A549 (cell line): ENCODE measurements at regions of chr11 and their contacts with region 1.

Region 1: GRCh38 chr11:75388386-75389275 is 10.7 kb upstream of the RPS3 start:
- DNase-seq: peak; percentile 86 to 87
- ATAC-seq: peak; percentile 57 to 73
- H3K4me3 ChIP-seq: no peak overlapping the region
- H3K27ac ChIP-seq: peak overlapping the region; percentile 36 to 75; a peak in 5 of 6 replicates
- H3K4me1 ChIP-seq: peaks cover 39% of the 10 kb centered on the region
- CTCF ChIP-seq: peak; percentile 95
- EP300 ChIP-seq: no peak
- POLR2A ChIP-seq: no peak
- RAD21 ChIP-seq: peak; percentile 92 to 94

Region 2: DNA sequence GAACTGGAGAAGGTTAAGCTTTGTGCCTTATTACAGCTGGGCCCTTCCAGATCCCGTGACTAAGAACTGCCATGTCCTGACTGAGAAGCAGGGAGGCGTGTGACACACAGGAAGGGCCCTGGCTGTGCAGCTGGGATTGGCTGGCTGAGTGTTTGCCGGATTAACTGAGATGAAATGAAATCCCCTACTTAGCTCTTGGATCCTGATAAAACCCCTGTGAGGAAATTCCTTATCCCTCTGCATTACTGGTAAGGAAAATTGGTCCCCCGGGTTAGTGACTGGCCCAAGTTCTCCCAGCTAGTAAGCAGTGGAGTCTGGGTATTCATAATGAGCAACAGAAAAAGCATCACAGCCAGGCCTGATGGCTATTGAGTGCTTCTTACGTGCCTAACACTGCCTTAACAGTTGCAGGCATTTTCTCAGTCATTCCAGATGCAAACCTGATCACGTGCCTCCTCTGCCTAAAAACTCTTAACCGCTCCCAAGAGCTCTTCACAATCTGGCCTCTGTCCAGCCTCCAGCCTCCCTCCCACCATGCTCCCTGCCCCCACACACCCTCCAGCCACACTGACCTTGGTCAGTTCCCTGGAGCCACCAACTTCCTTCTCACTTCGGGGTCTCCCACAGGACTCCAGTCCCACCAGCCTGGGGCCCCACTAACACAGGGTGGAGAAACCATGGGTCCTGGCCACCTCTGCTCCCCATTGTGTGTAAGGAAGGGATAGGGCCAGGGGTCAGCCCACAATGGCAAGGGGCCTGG is 74.9 kb before region 1 on chr11:
- CTCF ChIA-PET with region 1: interaction called, 13 read pairs
- POLR2A ChIA-PET with region 1: no interaction called
- DNase-seq: no peak
- ATAC-seq: no peak; a peak in 1 of 6 replicates
- H3K4me3 ChIP-seq: no peak overlapping the region
- H3K27ac ChIP-seq: no peak overlapping the region
- H3K4me1 ChIP-seq: peaks cover 2% of the 10 kb centered on the region; the same call in 2 of the 3 replicates
- CTCF ChIP-seq: no peak
- EP300 ChIP-seq: no peak
- POLR2A ChIP-seq: no peak
- RAD21 ChIP-seq: no peak

Region 3: DNA sequence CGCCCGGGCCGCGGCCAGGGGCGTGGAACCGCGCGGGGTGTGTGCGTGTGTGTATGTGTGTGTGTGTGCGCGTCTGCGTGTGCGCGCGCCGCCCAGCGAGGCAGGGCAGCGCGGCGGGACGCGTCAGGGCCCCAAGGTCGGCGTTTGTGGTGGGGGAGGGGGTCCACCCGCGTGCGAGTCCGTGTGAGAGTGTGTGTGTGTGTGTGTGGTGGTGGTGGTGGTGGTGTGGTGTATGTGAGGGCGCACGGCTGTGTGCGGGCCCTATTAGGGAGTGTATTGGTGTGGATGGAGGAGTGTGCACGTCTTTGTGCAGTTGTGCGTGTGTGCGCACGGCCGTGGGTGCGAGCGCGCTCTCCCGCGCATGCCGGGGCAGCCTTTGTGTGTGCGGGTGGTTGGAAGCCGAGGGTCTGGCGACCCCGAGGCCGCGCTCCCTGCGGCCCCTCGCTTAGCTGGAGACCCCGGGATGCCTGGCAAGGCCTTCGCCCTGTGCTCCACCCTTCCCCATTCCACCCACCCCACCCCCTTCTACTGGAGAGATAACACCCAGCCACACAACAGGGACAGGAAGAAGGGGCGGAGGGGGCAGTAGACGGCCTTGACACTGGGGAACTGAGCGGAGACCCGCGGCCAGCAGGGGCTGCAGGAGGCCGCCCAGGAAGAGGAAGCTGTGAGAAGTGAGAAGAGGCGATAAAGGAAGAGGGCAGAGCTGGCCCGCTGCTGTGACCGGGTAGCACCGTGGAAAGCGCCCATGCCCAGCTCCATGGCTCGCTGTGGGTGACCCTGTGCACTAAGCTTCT is 36.6 kb before region 1 on chr11:
- CTCF ChIA-PET with region 1: interaction called, 18 read pairs
- POLR2A ChIA-PET with region 1: no interaction called
- DNase-seq: peak in 1 of 2 experiments; percentile 30
- ATAC-seq: peak; percentile 56 to 65
- H3K4me3 ChIP-seq: peak overlapping the region; percentile 77
- H3K27ac ChIP-seq: peak overlapping the region; percentile 77 to 93
- H3K4me1 ChIP-seq: peaks cover 47% of the 10 kb centered on the region
- CTCF ChIP-seq: no peak
- EP300 ChIP-seq: no peak
- POLR2A ChIP-seq: peak; percentile 31; the same call in 1 of the 2 replicates
- RAD21 ChIP-seq: no peak

Region 4: GRCh38 chr11:75406338-75406777 is 17.7 kb after region 1 on chr11:
- CTCF ChIA-PET with region 1: interaction called, 53 read pairs
- POLR2A ChIA-PET with region 1: no interaction called
- DNase-seq: no peak
- ATAC-seq: no peak
- H3K4me3 ChIP-seq: no peak overlapping the region
- H3K27ac ChIP-seq: no peak overlapping the region
- H3K4me1 ChIP-seq: peaks cover 49% of the 10 kb centered on the region
- CTCF ChIP-seq: no peak
- EP300 ChIP-seq: no peak
- POLR2A ChIP-seq: no peak
- RAD21 ChIP-seq: no peak

Region 5: DNA sequence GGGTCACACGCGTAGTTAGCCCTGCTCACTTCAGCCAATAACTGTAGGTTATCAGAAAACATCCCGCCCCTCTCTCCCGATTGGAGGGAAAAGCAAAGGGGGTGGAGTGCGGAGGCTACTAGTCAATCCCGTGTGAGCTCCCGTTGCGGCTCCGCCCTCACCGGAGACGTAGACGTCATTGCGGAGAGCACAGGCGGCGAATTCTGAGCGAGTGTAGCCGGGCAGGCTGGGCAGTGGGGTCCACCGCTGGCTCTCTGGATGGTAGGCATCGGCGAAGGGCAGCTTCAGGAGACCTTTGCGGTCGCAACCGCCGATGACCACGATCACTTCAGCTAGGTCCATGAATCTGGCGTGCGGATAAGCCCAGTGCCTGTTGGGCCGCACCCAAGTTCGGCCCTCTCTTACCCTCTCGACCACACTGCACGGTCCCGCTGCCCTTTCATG is 39.7 kb after region 1 on chr11:
- CTCF ChIA-PET with region 1: interaction called, 27 read pairs
- POLR2A ChIA-PET with region 1: no interaction called
- DNase-seq: no peak
- ATAC-seq: no peak
- H3K4me3 ChIP-seq: no peak overlapping the region
- H3K27ac ChIP-seq: no peak overlapping the region
- H3K4me1 ChIP-seq: peaks cover 16% of the 10 kb centered on the region
- CTCF ChIP-seq: no peak
- EP300 ChIP-seq: no peak
- POLR2A ChIP-seq: no peak
- RAD21 ChIP-seq: no peak

Region 6: DNA sequence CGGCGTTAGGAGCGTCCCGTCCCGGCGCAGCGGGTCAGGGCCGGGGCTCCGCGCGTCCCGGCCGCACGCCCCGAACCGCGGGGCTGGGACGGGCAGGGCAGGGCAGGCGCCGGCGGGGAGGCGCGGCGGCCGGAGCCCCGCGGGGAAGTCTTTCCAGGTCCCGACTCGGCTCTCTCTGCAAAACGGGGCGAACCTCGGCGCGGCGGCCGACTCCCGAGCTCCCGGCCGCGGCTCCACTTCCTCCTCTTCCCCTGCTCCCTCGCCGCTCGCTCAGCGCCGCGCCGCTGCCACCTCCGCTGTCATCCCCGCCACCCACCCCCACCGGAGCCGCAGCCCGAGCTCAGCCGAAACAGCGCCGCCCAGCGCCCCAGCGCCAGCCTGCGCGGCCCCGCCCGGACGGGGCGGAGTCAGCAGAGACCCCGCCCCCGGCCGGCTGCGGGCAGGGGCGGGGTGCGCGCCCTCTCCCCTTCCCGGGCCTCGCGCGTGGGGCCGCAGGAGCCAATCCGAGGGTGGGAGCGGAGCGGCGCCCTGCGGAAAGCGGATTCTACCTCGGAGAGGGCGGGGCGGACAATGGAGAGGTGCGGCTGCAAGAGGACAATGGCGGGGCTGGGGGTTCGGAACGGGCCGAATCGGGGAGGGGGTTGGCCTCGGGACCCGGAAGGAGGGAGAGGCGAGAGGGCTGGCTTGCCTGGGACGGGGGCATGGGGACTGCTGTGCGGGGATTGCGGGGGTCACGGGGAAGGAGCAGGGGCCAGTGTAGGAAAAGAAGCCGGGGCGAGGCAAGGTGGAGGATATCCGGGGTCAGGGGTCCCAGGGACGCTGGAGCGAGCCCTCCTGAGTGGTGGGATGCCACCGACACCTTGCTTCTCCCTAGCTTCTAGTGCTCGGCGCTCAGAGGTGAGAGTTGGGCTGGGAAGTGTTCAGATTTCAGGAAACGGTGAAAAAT is 137.2 kb after region 1 on chr11 and contains the start of gene GDPD5:
- CTCF ChIA-PET with region 1: interaction called, 172 read pairs
- POLR2A ChIA-PET with region 1: no interaction called
- DNase-seq: peak; percentile 76 to 89
- ATAC-seq: peak; percentile 81 to 90
- H3K4me3 ChIP-seq: peak within 1 kb of the TSS; percentile 91
- H3K27ac ChIP-seq: peak within 1 kb of the TSS; percentile 95
- H3K4me1 ChIP-seq: peaks cover 16% of the 10 kb centered on the region
- CTCF ChIP-seq: peak; percentile 83
- EP300 ChIP-seq: no peak
- POLR2A ChIP-seq: peak; percentile 37
- RAD21 ChIP-seq: peak; percentile 27 to 76; a peak in 3 of 5 replicates
- polyA plus RNA-seq, gene GDPD5: 3.9 and 4.7 TPM in 2 replicates